PC-3 (cell line): ENCODE measurements at regions of chr19 and their contacts with region 1.

Region 1: DNA sequence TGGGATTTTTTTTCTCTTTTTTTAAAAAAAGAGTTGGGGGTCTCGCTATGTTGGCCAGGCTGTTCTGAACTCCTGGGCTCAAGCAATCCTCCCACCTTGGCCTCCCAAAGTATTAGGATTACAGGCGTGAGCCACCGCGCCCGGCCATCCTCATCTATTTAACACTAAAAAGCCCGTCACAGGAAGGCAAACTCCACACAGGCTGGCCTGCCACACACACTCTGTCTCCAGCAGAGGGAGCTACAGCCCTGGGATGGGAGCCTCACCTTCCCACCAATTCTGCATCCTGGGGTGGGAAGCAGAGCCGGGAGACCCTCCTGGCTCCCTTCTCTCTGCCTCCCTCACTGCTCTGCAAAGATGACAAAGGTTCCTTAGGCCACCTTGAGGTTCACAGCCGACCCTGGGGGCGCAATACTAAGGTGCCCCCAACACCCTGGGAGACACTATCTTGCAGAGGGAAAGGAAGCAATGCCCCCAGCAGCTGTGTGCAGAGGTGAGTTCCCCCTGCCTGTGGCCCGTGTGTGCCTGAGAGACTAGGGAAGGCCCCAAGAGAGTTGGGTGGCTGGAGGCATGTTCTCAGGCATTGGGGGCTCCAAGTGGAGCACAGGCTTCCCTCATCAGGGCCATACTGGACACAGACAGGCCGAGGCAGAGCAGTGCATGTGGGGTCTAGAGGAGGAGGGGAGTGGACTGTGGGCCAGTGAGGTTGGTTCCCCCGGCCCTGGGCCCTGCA is 27.4 kb upstream of the TIMM44 start:
- DNase-seq: peak; percentile 76
- ATAC-seq: peak; percentile 77
- H3K4me3 ChIP-seq: no peak overlapping the region
- H3K27ac ChIP-seq: no peak overlapping the region
- H3K4me1 ChIP-seq: peaks cover 3% of the 10 kb centered on the region; the same call in 1 of the 2 replicates
- H3K27me3 ChIP-seq: no peaks in the 10 kb centered on the region
- CTCF ChIP-seq: peak; percentile 98

Region 2: DNA sequence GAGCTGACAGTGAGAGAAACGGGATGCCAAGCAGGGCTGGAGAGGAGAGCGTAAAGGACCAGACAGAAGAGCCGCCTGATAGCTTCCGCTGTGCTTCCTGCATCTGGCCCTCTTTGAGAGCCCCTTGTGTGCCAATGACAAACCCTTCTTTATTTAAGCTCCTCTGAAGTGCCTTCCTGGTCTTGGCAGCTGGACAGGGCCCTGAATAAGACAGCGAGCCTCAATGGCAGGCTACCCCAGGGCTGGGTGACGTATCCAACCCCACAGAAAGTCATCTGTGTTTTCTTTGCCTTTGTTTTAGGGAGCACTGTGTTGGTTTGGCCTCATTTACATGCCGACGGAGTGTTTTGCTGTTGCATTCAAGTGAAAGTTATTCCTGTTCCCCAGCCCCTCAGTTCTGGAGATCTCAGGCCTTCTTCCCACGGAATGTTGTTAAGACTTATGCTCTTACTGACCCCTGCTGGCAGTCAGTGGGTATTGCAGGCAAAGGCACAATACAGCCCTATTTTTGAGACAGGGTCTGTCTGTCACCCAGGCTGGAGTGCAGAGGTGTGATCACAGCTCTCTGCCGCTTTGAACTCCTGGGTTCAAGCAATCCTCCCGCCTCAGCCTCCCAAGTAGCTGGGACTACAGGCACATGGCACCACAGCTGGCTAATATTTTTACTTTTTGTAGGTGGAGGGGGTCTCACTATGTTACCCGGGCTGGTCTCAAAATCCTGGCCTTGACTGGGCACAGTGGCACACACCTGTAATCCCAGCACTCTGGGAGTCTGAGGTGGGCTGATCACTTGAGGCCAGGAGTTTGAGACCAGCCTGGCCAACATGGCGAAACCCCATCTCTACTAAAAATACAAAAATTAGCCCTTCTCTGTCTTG is 98.5 kb after region 1 on chr19:
- CTCF ChIA-PET with region 1: no interaction called
- POLR2A ChIA-PET with region 1: no interaction called
- intact Hi-C with region 1: loop called (anchors 2 kb)
- DNase-seq: peak; percentile 72
- ATAC-seq: peak; percentile 33; the same call in 1 of the 2 replicates
- H3K4me3 ChIP-seq: no peak overlapping the region
- H3K27ac ChIP-seq: no peak overlapping the region
- H3K4me1 ChIP-seq: no peaks in the 10 kb centered on the region
- H3K27me3 ChIP-seq: no peaks in the 10 kb centered on the region
- CTCF ChIP-seq: peak; percentile 93

Region 3: DNA sequence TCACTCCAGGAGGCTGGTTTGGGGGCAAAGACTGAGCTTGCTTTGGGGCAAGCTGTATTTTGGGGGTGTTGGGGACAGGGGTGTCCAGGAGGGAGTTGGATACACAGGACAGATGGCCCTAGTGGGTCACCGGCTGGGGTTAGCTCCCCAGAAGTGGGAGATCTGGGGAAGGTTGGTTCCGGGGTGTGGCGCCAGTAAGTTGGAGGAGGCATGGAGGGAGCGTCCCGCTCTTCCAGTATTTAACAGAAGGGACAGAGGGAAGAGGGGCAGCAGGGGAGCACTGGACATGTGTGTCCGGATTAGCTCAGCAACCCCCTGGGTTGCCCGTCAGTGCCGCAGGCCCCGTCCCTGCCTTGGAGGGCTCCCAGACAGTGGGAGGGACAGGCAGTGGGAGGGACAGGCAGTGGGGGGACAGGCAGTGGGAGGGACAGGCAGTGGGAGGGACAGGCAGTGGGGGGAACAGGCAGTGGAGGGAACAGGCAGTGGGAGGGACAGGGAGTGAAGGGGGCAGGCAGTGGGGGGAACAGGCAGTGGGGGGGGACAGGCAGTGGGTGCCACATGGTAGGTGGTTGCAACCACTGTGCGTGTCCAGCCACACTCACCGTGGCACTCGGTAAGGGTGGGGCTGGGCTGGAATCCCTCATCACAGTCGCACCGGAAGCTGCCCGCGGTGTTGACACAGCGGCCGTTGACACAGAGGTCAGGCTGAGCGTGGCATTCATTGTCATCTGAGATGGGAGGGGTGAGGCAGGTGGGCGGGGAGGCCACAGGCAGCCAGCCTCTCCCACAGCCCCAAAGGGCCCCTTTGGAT is 114.9 kb after region 1 on chr19:
- CTCF ChIA-PET with region 1: no interaction called
- POLR2A ChIA-PET with region 1: no interaction called
- intact Hi-C with region 1: no loop called
- DNase-seq: peak; percentile 77
- ATAC-seq: peak; percentile 78
- H3K4me3 ChIP-seq: no peak overlapping the region
- H3K27ac ChIP-seq: no peak overlapping the region
- H3K4me1 ChIP-seq: peaks cover 10% of the 10 kb centered on the region
- H3K27me3 ChIP-seq: no peaks in the 10 kb centered on the region
- CTCF ChIP-seq: no peak